ENCODE measurements at regions of chr6 and their contacts with region 1.

Region 1: DNA sequence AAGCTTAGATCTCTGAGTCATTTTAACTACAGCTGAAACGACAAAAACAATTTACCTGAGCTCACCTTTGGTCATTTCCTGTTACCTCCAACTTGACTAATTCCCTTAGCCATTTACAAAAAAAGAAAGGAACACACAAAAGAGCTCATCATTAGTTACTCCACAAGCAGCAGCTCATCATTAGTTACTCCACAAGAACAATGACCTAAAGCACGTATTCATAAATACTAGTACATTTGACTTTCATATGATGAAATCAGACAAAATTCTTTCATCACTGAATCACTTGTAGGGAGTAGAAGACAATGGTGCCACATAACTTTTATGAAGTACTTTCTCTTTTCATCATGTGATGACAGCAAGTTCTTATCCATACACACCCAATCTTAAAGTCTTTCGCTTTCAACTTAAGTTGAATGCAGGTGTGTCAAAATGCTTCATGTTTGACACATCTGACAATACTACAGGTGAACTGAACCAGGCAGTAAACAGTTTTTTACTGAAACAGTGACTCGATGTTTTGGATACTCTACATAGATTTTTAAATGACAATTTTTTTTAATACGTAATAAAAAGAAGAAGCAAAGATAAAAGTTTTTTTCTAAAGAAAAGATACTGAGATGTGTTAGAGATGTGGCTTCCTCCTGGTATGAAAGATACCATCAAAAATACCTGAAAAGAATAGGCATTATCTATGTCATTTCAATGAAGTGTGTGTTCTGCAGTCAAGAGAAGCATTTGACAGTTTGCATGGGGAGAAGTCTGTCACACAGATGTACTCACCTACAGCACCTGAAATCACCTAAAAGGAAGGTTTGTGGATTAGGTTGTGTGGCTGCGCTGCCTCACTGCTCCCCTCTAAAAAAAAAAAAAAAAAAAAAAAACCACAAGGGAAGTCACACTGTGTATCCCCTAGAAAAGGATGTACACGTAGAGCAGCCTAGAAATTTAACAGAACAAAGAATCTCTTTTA is 109.1 kb downstream of the PRDM1 start:
- DNase-seq: no peak
- H3K4me3 Mint-ChIP-seq: no peak overlapping the region
- H3K27ac Mint-ChIP-seq: peak overlapping the region; percentile 81
- H3K4me1 Mint-ChIP-seq: peaks cover 9% of the 10 kb centered on the region
- H3K27me3 Mint-ChIP-seq: no peaks in the 10 kb centered on the region
- CTCF ChIP-seq: no peak

Region 2: DNA sequence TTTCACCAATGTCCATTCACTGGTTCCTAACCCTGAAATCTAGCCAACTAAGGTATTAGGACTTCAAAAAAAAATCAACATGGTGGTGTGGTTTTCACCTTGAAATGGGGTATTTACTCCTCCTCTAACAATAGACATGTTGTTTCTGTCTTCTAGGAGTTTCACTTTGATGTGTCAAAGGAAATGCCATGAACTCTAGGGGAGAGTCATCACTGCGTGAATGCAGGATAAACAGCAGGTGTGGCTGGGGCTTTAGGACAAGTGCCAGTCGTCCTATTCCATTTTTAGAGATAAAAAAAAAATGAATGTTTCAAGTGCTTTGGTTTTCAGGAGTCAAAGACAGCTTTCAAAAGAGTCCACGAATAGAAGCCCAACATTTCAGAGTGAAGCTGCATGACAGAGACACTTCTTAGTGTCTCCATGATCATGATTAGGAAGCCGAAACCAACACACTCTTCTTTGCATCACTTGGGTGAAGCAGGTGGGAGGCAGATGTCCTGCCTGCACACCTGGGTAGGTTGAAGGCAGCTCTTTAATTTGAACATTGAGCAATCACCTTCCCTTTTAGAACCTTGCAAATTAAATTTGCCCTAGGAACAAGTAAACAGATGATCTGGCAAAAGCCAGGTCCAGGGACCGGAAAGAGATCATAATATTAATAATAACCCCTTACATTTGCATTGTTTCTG is 437.6 kb before region 1 on chr6:
- CTCF ChIA-PET with region 1: no interaction called
- intact Hi-C with region 1: no loop called
- DNase-seq: no peak
- H3K4me3 Mint-ChIP-seq: no peak overlapping the region
- H3K27ac Mint-ChIP-seq: peak overlapping the region; percentile 86
- H3K4me1 Mint-ChIP-seq: peaks cover 63% of the 10 kb centered on the region
- H3K27me3 Mint-ChIP-seq: no peaks in the 10 kb centered on the region
- CTCF ChIP-seq: no peak

Region 3: DNA sequence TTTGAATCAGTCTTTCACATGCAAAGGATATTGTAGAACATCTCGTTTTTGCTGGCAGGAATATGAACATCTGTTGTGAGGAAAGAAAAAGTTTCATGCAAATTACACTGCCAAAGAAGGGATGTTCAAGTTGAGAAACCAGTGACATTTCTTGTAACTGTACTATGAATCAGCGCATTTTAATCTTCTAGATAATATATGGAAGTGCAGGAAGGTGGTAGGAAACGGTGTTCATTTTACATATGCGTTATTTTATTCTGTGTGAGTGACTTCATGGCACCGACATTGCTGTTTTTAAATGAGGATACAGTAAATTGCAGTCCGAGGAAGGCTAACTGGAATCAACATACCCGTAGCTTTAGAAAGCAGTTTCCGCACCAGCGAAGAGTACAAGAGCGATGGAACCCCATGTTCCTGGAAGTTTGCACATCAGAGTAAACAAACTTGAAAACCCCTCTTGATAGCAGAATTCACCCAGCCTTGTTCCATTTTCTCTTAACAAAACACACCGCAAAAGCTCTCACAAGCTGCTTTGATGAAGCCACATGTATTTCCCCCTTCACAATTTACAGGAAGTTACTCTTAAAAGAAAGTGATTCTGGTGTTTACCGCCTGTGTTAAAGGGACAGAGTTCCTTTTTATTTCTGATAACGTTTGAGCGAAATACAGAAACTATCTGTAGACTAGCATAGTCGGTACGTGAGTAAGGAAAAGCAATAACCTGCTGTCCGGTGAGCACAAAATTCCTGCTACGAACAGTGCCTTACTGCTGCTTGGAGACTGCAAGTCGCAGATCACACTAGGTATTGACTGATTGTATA is 97.6 kb before region 1 on chr6:
- CTCF ChIA-PET with region 1: interaction called, 3 read pairs
- intact Hi-C with region 1: loop called (anchors 10 kb)
- DNase-seq: no peak
- H3K4me3 Mint-ChIP-seq: peak overlapping the region; percentile 71
- H3K27ac Mint-ChIP-seq: peak overlapping the region; percentile 67
- H3K4me1 Mint-ChIP-seq: peaks cover 28% of the 10 kb centered on the region
- H3K27me3 Mint-ChIP-seq: no peaks in the 10 kb centered on the region
- CTCF ChIP-seq: no peak

Measured in Calu3 (cell line).